ENCODE measurements at regions of chr5 and their contacts with region 1.

Region 1: GRCh38 chr5:157523976-157524375 is 51.6 kb downstream of the ADAM19 start:
- DNase-seq: no peak
- ATAC-seq: no peak
- H3K4me3 ChIP-seq: no peak overlapping the region
- H3K27ac ChIP-seq: no peak overlapping the region
- H3K4me1 ChIP-seq: peaks cover 19% of the 10 kb centered on the region
- H3K27me3 ChIP-seq: no peaks in the 10 kb centered on the region
- CTCF ChIP-seq: no peak
- EP300 ChIP-seq: no peak
- POLR2A ChIP-seq: no peak
- RAD21 ChIP-seq: no peak

Region 2: GRCh38 chr5:157535042-157535865 is 11.3 kb after region 1 on chr5:
- CTCF ChIA-PET with region 1: interaction called, 27 read pairs
- POLR2A ChIA-PET with region 1: interaction called, 11 read pairs
- RAD21 ChIA-PET with region 1: interaction called, 35 read pairs
- SMC1A ChIA-PET with region 1: interaction called, 40 read pairs
- in situ Hi-C with region 1: no loop called
- intact Hi-C with region 1: loop called (anchors 2 kb)
- DNase-seq: no peak
- ATAC-seq: no peak
- H3K4me3 ChIP-seq: no peak overlapping the region
- H3K27ac ChIP-seq: no peak overlapping the region
- H3K4me1 ChIP-seq: peaks cover 21% of the 10 kb centered on the region
- H3K27me3 ChIP-seq: no peaks in the 10 kb centered on the region
- CTCF ChIP-seq: no peak
- EP300 ChIP-seq: no peak
- POLR2A ChIP-seq: no peak
- RAD21 ChIP-seq: no peak